HEK293 (cell line): ENCODE measurements at regions of chr3 and their contacts with region 1.

Region 1: GRCh38 chr3:184133840-184134731 is 1.1 kb upstream of the EIF2B5 start:
- H3K4me3 ChIP-seq: peak overlapping the region; percentile 89
- H3K27ac ChIP-seq: peak overlapping the region; percentile 47; the same call in 1 of the 2 replicates
- H3K4me1 ChIP-seq: peaks cover 6% of the 10 kb centered on the region; the same call in 1 of the 2 replicates
- CTCF ChIP-seq: no peak; the same call in 1 of the 2 replicates

Region 2: GRCh38 chr3:183802989-183803388 is 331.1 kb before region 1 on chr3:
- CTCF ChIA-PET with region 1: no interaction called
- POLR2A ChIA-PET with region 1: no interaction called
- H3K4me3 ChIP-seq: no peak overlapping the region
- H3K27ac ChIP-seq: no peak overlapping the region
- H3K4me1 ChIP-seq: no peaks in the 10 kb centered on the region
- CTCF ChIP-seq: no peak

Region 3: GRCh38 chr3:184117636-184118035 is 16.4 kb before region 1 on chr3:
- CTCF ChIA-PET with region 1: no interaction called
- POLR2A ChIA-PET with region 1: no interaction called
- H3K4me3 ChIP-seq: no peak overlapping the region
- H3K27ac ChIP-seq: no peak overlapping the region
- H3K4me1 ChIP-seq: no peaks in the 10 kb centered on the region
- CTCF ChIP-seq: no peak

Region 4: DNA sequence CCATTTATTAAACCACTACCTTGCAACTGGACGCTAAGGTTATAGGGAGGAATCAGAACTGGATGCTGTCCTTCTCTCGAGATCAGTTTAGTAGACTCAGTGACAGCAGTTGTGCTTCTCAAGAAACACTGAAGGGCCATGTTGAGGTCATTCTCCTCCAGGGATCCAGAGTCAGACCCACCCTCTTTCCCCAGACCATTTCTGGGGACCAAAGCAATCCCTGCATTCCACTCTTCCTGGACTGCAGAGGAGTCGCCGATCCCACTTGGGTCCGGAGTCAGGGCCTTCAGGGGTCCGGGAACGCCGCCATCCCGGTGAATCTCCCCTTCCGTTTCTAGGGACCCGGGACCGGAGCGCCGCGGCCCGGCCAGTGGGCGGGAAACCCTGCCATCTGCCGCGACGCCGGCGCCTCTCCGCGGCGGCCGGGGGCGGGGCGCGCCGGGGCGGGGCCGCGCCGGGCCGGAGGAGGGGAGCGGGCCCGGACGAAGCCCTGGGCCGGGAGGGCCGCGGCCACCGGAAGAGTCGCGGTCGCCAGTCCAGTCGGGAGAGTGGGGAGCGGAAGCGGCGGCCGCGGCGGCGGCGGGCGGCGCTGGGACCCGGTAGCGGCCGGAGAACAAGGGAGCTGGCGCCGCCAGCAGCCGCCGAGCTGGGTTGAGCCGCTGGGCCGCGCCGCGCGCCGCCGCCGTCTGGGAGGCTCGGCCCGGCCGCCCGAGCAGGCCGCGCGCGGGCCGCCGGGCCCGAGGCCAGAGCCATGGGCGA is 21.0 kb after region 1 on chr3 and contains the start of gene DVL3:
- CTCF ChIA-PET with region 1: no interaction called
- POLR2A ChIA-PET with region 1: interaction called, 11 read pairs
- H3K4me3 ChIP-seq: peak within 1 kb of the TSS; percentile 82
- H3K27ac ChIP-seq: peak within 1 kb of the TSS; percentile 95
- H3K4me1 ChIP-seq: no peaks in the 10 kb centered on the region
- CTCF ChIP-seq: no peak